ENCODE measurements at regions of chr6 and their contacts with region 1.

Region 1: DNA sequence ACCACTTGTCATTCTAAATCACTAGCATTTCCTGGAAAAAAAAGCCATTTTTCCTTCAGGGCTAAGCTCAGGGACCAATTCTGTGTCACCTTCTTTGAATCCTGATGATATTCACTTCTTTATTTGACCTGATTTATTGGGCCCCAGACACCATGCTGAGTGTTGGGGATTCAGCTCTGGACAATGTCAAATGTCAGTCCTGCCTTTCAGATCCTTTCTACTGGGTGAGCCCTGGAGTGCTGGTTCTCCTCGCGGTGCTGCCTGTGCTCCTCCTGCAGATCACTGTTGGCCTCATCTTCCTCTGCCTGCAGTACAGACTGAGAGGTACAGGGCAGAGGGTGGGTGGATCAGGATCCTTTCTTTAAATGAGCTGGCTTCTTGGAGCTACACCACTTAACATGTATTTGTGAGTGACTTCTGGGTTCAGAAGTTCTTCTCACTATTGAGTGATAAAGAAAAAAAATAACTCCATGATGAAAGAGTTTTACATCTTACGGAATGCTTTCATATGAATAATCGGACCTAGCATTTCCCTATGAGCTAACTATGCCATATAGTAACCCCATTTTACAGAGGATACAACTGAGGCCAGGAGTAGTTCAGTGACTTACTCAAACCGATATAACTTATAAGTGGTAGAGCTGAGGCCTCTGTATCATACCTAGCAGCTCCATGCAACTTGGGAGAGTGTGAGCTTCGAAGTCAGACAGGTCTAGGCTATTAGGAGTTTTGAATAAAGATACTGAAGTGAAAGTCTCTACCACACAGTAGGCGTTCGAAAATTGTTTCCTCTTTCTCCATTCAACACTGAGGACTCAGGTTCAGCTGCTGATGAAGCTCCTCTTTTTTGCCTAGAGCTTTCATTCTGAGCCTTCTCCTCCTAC is 9.3 kb downstream of the MOG start:
- DNase-seq: no peak
- H3K4me3 ChIP-seq: no peak overlapping the region
- CTCF ChIP-seq: no peak

Region 2: DNA sequence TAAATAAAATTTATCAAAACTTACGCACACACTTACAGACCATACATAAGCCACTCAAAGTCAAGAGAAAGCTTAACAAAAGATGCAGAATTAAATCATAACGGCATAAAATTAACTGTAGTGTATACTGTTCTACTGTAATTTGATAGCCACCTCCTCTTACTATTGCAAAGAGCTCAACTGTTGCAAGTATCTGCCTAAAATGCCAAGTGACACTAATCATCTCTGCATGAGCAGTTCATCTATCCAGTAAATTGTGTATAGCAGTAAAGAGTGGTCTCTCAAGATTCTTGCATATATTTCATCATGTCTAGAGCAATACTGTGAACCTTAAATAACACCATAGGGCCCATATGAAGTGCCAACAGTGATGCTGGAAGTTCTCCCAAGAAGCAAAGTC is 69.0 kb before region 1 on chr6:
- in situ Hi-C with region 1: loop called (anchors 5 kb)
- DNase-seq: no peak
- H3K4me3 ChIP-seq: no peak overlapping the region
- CTCF ChIP-seq: no peak

Measured in astrocyte of the cerebellum (primary cell).